ENCODE measurements at regions of chr1 and their contacts with region 1.

Region 1: GRCh38 chr1:155562581-155563376 is at the start of gene ASH1L:
- DNase-seq: peak; percentile 95
- H3K4me3 Mint-ChIP-seq: peak within 1 kb of the TSS; percentile 100
- H3K27ac Mint-ChIP-seq: peak within 1 kb of the TSS; percentile 97
- H3K4me1 Mint-ChIP-seq: peaks cover 48% of the 10 kb centered on the region
- H3K27me3 Mint-ChIP-seq: no peaks in the 10 kb centered on the region
- total RNA-seq, gene ASH1L: 27.4 to 27.5 TPM

Region 2: GRCh38 chr1:155244368-155245162 is 318.2 kb before region 1 on chr1:
- CTCF ChIA-PET with region 1: no interaction called
- intact Hi-C with region 1: loop called (anchors 5 kb)
- DNase-seq: peak; percentile 99
- H3K4me3 Mint-ChIP-seq: peak overlapping the region; percentile 88
- H3K27ac Mint-ChIP-seq: peak overlapping the region; percentile 98
- H3K4me1 Mint-ChIP-seq: peaks cover 40% of the 10 kb centered on the region
- H3K27me3 Mint-ChIP-seq: peaks cover 2% of the 10 kb centered on the region

Region 3: GRCh38 chr1:155323798-155324610 is 238.8 kb before region 1 on chr1:
- CTCF ChIA-PET with region 1: no interaction called
- intact Hi-C with region 1: loop called (anchors 2 kb)
- DNase-seq: peak; percentile 96
- H3K4me3 Mint-ChIP-seq: peak overlapping the region; percentile 86
- H3K27ac Mint-ChIP-seq: peak overlapping the region; percentile 61
- H3K4me1 Mint-ChIP-seq: peaks cover 42% of the 10 kb centered on the region
- H3K27me3 Mint-ChIP-seq: peaks cover 2% of the 10 kb centered on the region

Region 4: GRCh38 chr1:155466996-155467395 is 95.8 kb before region 1 on chr1:
- CTCF ChIA-PET with region 1: no interaction called
- intact Hi-C with region 1: loop called (anchors 5 kb)
- DNase-seq: no peak
- H3K4me3 Mint-ChIP-seq: no peak overlapping the region
- H3K27ac Mint-ChIP-seq: peak overlapping the region; percentile 74
- H3K4me1 Mint-ChIP-seq: peaks cover 54% of the 10 kb centered on the region
- H3K27me3 Mint-ChIP-seq: no peaks in the 10 kb centered on the region

Region 5: GRCh38 chr1:155540000-155540874 is 22.5 kb before region 1 on chr1:
- CTCF ChIA-PET with region 1: no interaction called
- intact Hi-C with region 1: loop called (anchors 1 kb)
- DNase-seq: no peak
- H3K4me3 Mint-ChIP-seq: no peak overlapping the region
- H3K27ac Mint-ChIP-seq: peak overlapping the region; percentile 60
- H3K4me1 Mint-ChIP-seq: peaks cover 64% of the 10 kb centered on the region
- H3K27me3 Mint-ChIP-seq: no peaks in the 10 kb centered on the region

Region 6: DNA sequence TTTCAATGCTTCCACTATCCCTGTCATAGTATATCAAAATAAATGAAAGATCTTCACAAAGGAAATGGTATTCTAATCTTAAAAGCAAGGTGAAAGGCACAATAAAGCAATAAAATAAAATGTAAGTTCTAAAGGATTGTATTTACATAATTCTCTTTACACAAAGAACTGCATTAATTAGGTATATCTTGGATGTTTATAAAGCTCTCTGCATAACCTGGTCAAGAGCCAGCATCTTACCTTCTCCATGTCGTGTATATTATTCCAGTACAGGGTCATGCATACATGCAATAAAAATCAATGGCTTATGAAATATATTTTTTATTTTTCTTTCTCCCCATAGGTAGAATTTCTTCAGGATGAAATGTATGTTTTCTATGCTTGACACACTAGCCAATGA is 230.4 kb after region 1 on chr1:
- CTCF ChIA-PET with region 1: no interaction called
- intact Hi-C with region 1: no loop called
- DNase-seq: no peak
- H3K4me3 Mint-ChIP-seq: no peak overlapping the region
- H3K27ac Mint-ChIP-seq: no peak overlapping the region
- H3K4me1 Mint-ChIP-seq: no peaks in the 10 kb centered on the region
- H3K27me3 Mint-ChIP-seq: no peaks in the 10 kb centered on the region

Measured in activated naive CD4-positive, alpha-beta T cell treated with anti-CD3 and anti-CD28 coated beads for 36 hours (primary cell).